ENCODE measurements at regions of chr9 and their contacts with region 1.

Region 1: DNA sequence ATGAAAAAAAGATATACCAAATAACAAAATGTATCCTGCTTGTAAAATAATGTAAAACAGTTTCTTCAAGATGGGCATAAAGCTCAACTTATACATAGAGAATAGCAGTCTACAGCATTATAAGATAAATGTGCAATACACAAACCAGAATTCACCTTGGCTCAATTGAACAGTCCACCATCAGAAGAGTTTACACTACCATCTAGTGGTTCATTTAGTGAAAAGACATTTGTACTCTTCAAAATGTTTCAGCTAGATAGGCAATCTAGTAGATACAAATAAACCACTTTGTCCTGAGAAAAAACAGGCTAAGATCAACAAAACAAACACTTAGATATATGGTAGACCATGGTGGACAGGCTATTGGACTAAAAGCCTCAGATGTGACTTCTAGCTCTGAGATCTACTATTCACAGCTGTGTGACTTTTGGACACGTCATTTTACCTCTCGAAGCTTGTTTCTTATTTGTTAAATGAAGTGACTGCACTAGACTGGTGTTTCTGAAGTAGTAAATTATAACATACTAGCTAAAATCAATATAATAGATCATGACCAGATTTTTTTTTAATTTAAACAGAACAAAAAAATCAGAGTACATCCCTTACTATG is 22.1 kb upstream of the TPD52L3 start:
- DNase-seq: no peak
- H3K4me3 ChIP-seq: no peak overlapping the region
- H3K27ac ChIP-seq: no peak overlapping the region
- H3K4me1 ChIP-seq: no peaks in the 10 kb centered on the region
- H3K27me3 ChIP-seq: peaks cover 0 to 20% (median 0%) of the 10 kb centered on the region in 7 donors
- CTCF ChIP-seq: peak in 8 of 11 experiments; percentile 28 to 58 (median 42)
- POLR2A ChIP-seq: no peak

Region 2: GRCh38 chr9:5617749-5618148 is 688.3 kb before region 1 on chr9:
- intact Hi-C with region 1: no loop called
- DNase-seq: no peak
- H3K4me3 ChIP-seq: no peak overlapping the region
- H3K27ac ChIP-seq: peak overlapping the region in 7 of 8 donors; percentile 4 to 80 (median 64)
- H3K4me1 ChIP-seq: peaks cover 7 to 71% (median 35%) of the 10 kb centered on the region in 6 donors
- H3K27me3 ChIP-seq: no peaks in the 10 kb centered on the region
- CTCF ChIP-seq: no peak
- POLR2A ChIP-seq: no peak

Region 3: DNA sequence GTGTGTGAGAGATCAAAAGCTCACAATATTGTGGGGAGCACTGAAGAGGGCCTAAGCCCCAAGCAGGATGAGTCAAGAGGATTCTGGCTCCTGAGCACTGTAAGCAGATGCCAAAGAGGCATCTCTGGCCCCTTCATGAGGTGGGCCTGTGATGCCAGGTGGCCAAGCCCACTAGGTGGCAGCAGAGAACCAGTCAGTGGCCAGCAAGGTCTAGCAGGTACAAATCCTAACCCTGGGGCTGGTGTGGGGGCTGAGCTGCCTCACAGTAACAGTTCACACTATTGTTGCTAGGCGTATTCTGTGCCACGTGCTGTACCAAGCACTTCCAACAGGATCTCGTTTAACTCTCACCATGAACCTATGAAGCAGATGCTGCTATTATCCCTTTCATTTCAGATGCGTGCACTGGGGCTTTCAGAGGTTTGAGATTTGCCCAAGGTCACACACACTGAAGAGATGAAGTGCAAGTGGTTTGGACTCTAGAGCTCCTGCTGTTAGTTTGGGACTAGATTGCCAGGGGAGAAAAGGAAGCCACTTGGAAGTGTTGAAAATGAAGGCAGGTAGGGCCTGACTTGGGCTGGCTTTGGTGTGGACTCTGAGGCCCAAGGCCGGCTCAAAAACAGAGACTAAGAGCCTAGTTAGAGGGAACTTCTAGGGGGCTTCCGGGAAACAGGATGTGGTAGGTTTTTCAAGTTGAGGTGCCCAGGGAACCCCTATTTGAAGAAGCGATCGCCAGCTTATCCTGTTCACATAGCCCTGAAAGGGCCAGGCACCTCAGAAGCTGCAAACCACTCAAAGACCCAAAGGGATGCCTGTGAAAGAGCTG is 419.7 kb before region 1 on chr9:
- intact Hi-C with region 1: loop called (anchors 10 kb)
- DNase-seq: peak; percentile 90
- H3K4me3 ChIP-seq: no peak overlapping the region
- H3K27ac ChIP-seq: no peak overlapping the region
- H3K4me1 ChIP-seq: peaks cover 0 to 7% (median 0%) of the 10 kb centered on the region in 6 donors
- H3K27me3 ChIP-seq: no peaks in the 10 kb centered on the region
- CTCF ChIP-seq: peak; percentile 63 to 93 (median 84)
- POLR2A ChIP-seq: no peak

Region 4: DNA sequence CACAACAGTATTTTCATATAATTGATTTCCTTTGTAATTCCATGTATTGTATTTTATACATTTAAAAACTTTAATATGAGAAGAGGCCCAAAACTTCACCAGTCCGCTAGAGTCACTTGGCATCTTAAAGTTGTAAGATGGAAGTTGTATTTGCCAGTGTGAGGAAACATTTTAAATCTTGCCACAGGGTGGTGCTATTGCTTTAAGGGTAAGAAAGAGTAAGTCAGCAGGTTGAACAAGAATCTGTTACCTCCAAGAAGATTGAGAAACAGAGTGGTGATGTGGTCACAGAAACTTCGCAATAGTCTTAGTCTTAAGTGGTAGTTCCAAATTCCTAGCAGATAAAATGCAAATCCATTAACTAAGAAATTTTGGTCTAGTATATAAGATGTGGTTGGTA is 250.8 kb before region 1 on chr9:
- intact Hi-C with region 1: loop called (anchors 10 kb)
- DNase-seq: no peak
- H3K4me3 ChIP-seq: no peak overlapping the region
- H3K27ac ChIP-seq: no peak overlapping the region
- H3K4me1 ChIP-seq: peaks cover 0 to 13% (median 7%) of the 10 kb centered on the region in 6 donors
- H3K27me3 ChIP-seq: no peaks in the 10 kb centered on the region
- CTCF ChIP-seq: peak in 10 of 11 experiments; percentile 21 to 59 (median 42)
- POLR2A ChIP-seq: no peak

Region 5: DNA sequence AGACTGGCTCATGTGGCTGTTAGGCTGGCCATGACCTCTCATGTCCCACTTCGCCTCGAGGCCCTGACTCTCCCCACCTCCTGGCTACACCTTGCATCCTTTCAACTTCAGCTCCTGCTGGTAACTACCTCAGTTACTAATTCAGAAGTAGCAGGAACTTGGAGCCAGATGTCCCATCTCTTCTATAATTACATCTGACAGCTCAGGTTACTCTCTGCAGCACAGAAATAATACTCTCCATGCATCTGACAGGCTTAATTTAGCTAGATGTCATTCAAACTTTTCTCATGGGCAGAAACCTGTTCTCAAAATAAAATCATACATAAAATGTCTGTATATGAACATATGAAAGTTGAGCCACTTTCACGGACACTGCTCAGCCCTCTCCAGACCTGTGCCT is 182.6 kb before region 1 on chr9:
- intact Hi-C with region 1: no loop called
- DNase-seq: no peak
- H3K4me3 ChIP-seq: no peak overlapping the region
- H3K27ac ChIP-seq: no peak overlapping the region
- H3K4me1 ChIP-seq: no peaks in the 10 kb centered on the region
- H3K27me3 ChIP-seq: peaks cover 0 to 8% (median 0%) of the 10 kb centered on the region in 7 donors
- CTCF ChIP-seq: no peak
- POLR2A ChIP-seq: no peak

Region 6: DNA sequence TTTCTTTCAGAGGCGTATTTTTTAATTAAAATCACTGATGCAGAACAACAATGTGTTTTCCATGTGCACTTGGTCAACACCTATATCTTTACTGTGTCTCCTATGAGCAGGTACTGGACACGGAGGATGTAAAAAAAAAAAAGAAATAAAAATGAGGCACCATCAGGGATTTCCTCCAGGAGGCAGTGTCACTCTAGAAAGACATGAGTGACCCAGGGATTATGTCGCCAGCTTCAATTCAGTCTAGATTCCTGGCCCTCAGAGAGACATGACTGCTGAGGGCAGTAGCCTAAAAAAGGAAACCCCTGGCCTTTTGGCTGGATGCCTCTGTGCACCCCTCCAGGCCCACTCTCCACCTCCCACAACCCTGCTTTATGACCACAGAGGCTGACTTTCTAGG is 108.7 kb before region 1 on chr9:
- intact Hi-C with region 1: loop called (anchors 10 kb)
- DNase-seq: no peak
- H3K4me3 ChIP-seq: no peak overlapping the region
- H3K27ac ChIP-seq: peak overlapping the region in 1 of 8 donors; percentile 44
- H3K4me1 ChIP-seq: no peaks in the 10 kb centered on the region
- H3K27me3 ChIP-seq: peaks cover 0 to 3% (median 0%) of the 10 kb centered on the region in 7 donors
- CTCF ChIP-seq: peak in 6 of 11 experiments; percentile 19 to 62 (median 24)
- POLR2A ChIP-seq: no peak

Region 7: GRCh38 chr9:6243746-6244145 is 62.3 kb before region 1 on chr9:
- intact Hi-C with region 1: no loop called
- DNase-seq: no peak
- H3K4me3 ChIP-seq: no peak overlapping the region
- H3K27ac ChIP-seq: no peak overlapping the region
- H3K4me1 ChIP-seq: no peaks in the 10 kb centered on the region
- H3K27me3 ChIP-seq: no peaks in the 10 kb centered on the region
- CTCF ChIP-seq: no peak
- POLR2A ChIP-seq: no peak